Psoas muscle (tissue), 8 donors: ENCODE measurements at regions of chr2 and their contacts with region 1.

Region 1: GRCh38 chr2:71646028-71646427 is 192.7 kb downstream of the DYSF start:
- DNase-seq: peak; percentile 70 to 90
- ATAC-seq: peak; percentile 98
- H3K4me3 ChIP-seq: no peak overlapping the region
- H3K27ac ChIP-seq: peak overlapping the region; percentile 78
- H3K4me1 ChIP-seq: peaks cover 11% of the 10 kb centered on the region
- H3K27me3 ChIP-seq: no peaks in the 10 kb centered on the region
- CTCF ChIP-seq: no peak

Region 2: GRCh38 chr2:70471129-70471528 is 1174.9 kb before region 1 on chr2:
- intact Hi-C with region 1: no loop called
- DNase-seq: no peak
- ATAC-seq: no peak
- H3K4me3 ChIP-seq: no peak overlapping the region
- H3K27ac ChIP-seq: no peak overlapping the region
- H3K4me1 ChIP-seq: no peaks in the 10 kb centered on the region
- H3K27me3 ChIP-seq: peaks cover 0 to 2% (median 0%) of the 10 kb centered on the region in 3 donors
- CTCF ChIP-seq: no peak

Region 3: GRCh38 chr2:71685078-71685848 is 39.2 kb after region 1 on chr2:
- intact Hi-C with region 1: loop called in 1 of 2 experiments (anchors 5 kb)
- DNase-seq: peak; percentile 73 to 91
- ATAC-seq: peak; percentile 67 to 87 (median 73)
- H3K4me3 ChIP-seq: no peak overlapping the region
- H3K27ac ChIP-seq: peak overlapping the region; percentile 81
- H3K4me1 ChIP-seq: peaks cover 45% of the 10 kb centered on the region
- H3K27me3 ChIP-seq: no peaks in the 10 kb centered on the region
- CTCF ChIP-seq: no peak

Region 4: DNA sequence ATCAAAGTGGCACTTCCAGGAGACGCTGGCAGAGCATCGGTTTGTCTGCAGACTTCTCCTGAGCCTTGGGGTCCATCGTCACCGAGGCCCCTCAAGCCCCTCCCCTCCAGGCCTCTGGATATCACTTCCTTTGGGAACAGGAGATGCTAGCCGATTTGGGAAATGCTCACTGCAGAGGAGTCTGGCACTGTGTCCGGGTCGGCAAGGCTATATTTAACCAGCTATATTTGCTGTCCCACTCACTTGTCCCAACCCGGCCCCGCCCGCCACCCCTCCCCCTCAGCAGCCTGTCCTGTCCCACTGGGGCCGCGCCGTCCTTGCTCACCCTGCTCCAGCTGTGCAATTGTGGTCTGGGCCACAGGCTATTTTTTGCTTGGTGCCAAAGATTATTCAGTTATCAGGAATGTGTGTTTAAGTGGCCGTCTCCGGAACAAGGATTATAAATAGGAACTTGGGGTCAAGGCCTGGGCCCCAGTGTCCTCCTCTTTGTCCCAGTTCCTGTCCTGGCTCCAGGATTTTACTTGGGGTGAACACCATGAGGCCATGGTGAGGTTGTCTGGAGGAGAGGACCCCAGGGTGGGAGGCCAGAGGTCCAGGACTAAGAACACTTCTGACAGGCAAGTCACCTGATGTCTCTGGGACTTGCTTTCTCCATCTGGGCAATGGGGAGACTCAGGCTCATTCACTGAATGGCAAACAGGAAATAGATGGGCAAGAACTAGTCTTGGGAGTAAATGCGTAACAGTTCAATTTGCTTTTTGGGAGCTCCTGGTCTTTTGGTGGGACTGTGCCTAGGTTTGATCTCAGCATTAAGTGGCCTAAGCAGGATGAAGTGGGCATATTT is 71.0 kb after region 1 on chr2:
- intact Hi-C with region 1: no loop called
- DNase-seq: peak; percentile 97
- ATAC-seq: peak; percentile 88 to 94 (median 93)
- H3K4me3 ChIP-seq: no peak overlapping the region
- H3K27ac ChIP-seq: peak overlapping the region; percentile 81
- H3K4me1 ChIP-seq: peaks cover 59% of the 10 kb centered on the region
- H3K27me3 ChIP-seq: no peaks in the 10 kb centered on the region
- CTCF ChIP-seq: no peak